ENCODE measurements at regions of chr2 and their contacts with region 1.

Region 1: GRCh38 chr2:38556006-38556801 is 46.5 kb downstream of the HNRNPLL start:
- DNase-seq: no peak
- H3K4me3 ChIP-seq: no peak overlapping the region
- H3K27ac ChIP-seq: no peak overlapping the region
- H3K4me1 ChIP-seq: no peaks in the 10 kb centered on the region
- H3K27me3 ChIP-seq: no peaks in the 10 kb centered on the region
- CTCF ChIP-seq: no peak
- POLR2A ChIP-seq: no peak

Region 2: DNA sequence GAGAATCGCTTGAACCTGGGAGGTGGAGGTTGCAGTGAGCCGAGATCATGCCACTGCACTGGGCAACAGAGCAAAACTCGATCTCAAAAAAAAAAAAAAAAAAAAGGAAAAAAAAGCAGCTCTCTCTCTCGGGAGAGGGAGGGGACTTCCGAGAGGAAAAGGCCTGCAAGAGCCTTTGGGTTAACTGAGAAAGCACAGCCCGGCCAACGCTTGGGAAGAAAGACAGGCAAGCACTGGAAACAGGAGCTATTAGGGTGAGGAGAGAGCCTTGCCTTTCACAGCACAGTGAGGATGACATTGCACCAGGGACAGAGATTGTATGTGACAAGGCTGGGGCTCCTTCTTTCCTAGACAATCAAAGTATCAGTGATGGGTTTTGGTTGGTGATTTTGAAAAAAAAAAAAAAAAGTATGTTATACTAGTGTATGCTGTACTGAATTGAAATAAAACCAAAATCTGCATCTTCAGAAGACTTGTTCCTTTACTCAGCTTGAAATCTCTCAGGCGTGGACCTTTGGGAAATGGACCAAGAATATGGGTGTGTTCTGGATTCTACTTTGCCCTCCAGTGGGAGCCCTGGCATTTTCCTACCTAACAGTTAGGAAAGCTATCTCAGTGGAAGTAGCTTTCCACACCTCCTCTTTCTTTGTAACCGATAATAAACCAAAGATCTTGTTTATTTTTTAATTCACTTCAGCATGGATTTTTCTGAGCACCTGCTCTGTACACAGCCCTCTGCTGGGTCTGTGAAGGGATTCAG is 178.3 kb after region 1 on chr2:
- CTCF ChIA-PET with region 1: interaction called, 3 read pairs
- POLR2A ChIA-PET with region 1: no interaction called
- dilution Hi-C with region 1: loop called (anchors 10 kb)
- intact Hi-C with region 1: no loop called
- DNase-seq: no peak
- H3K4me3 ChIP-seq: no peak overlapping the region
- H3K27ac ChIP-seq: no peak overlapping the region
- H3K4me1 ChIP-seq: no peaks in the 10 kb centered on the region
- H3K27me3 ChIP-seq: no peaks in the 10 kb centered on the region
- CTCF ChIP-seq: no peak
- POLR2A ChIP-seq: no peak

Measured in endothelial cell of umbilical vein (primary cell).